Right ventricle myocardium inferior (tissue), 1 donor: ENCODE measurements at regions of chr3 and their contacts with region 1.

Region 1: GRCh38 chr3:185983495-185984141 is 45.8 kb upstream of the TRA2B start:
- DNase-seq: peak; percentile 76
- ATAC-seq: peak; percentile 86

Region 2: DNA sequence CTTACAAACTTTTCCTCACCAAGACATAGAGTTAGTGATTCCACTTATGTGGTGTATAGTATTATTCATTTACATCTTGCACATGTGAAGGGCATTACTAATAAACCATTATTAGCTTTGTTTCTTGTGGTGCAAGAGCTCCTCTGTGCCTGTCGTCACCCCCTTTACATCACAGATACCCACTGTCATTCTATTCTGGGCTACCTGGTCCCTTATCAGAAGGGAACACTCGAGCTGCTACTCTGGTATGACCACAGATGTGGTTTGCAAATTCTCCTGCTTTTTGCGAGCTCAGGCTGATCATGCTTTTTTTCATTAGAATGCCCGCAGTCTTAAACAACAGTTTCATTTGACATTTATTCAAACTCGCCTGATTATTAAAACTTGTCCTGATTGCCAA is 411.4 kb before region 1 on chr3:
- intact Hi-C with region 1: no loop called
- DNase-seq: no peak
- ATAC-seq: no peak

Region 3: DNA sequence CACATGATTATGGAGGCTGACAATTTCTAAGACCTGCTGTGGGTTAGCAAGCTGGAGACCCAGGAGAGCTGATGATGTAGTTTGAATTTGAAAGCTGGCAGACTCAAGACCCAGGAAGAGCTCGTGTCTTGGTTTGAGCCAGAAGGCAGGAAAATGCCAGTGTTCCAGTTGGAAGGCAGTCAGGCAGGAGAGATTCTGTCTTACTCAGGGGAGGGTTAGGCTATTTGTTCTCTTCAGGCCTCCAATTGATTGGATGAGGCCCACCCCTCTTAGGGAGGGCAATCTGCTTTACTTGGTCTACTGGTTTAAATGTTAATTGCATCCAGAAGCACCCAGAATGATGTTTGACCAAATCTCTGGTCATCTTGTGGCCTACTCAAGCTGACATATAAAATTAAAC is 118.4 kb before region 1 on chr3:
- intact Hi-C with region 1: no loop called
- DNase-seq: no peak
- ATAC-seq: no peak

Region 4: GRCh38 chr3:186241910-186242821 is 258.5 kb after region 1 on chr3:
- intact Hi-C with region 1: loop called (anchors 1 kb)
- DNase-seq: peak; percentile 85
- ATAC-seq: peak; percentile 92

Region 5: GRCh38 chr3:186277268-186277909 is 293.8 kb after region 1 on chr3:
- intact Hi-C with region 1: loop called (anchors 5 kb)
- DNase-seq: no peak
- ATAC-seq: no peak

Region 6: DNA sequence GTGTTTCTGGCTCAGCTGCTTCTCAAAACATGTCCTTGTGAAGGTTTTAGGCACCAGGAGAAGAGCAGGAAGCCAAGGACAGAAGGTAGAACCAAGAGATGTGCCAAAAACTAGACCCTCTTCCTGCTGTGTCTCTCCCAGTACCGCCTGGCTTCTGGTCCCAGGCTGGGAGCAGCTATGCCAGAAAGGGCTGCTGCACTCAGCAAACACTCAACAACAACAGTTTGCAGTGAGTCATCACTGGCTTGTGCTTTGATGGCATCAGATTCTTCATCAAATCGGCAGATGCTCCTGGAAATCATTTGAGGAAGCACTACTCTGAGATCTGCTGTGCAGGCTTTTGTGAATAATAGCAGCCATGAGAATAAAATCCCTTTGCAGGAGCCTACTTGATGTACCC is 315.3 kb after region 1 on chr3:
- intact Hi-C with region 1: no loop called
- DNase-seq: no peak
- ATAC-seq: no peak

Region 7: DNA sequence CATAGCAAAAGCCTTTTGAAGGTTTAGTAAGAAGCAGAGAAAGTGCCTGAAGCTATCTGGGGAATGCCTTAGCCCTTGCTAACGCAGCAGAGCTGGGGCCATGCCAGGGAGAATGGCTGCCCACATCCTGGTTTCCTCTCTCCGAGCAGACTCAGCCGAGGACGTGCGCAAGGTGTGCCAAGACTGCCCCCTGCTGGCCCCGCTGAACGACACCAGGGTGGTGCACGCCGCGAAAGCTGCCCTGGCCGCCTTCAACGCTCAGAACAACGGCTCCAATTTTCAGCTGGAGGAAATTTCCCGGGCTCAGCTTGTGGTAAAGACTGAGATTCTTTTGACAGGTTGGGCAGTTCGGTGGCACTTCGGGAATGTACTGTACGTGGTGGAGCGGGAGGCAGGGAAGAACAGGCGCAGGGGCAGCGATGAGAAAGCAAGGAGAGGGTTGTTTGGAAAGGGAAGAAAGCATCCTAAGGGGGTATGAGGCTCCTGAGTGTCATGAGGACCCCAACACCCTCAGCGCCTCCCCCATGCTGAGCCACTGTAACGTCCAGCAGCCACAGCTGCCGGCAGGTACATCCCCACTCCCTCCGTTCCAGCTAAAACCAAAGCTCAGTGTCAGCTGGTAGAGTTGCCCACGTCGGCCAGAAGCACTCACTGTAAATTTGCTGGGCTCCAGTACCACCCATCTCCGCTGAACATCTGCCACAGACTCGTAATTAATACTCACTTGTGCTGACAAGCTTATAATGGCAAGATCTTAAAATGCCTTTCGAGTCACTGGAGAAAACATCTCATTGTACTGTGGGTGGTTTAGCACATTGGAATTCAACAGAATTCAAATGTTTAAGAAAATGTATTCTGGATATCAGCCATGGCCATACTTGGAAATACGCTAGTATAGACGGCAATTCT is 633.7 kb after region 1 on chr3:
- intact Hi-C with region 1: loop called (anchors 5 kb)
- DNase-seq: peak; percentile 91
- ATAC-seq: peak; percentile 95

Region 8: DNA sequence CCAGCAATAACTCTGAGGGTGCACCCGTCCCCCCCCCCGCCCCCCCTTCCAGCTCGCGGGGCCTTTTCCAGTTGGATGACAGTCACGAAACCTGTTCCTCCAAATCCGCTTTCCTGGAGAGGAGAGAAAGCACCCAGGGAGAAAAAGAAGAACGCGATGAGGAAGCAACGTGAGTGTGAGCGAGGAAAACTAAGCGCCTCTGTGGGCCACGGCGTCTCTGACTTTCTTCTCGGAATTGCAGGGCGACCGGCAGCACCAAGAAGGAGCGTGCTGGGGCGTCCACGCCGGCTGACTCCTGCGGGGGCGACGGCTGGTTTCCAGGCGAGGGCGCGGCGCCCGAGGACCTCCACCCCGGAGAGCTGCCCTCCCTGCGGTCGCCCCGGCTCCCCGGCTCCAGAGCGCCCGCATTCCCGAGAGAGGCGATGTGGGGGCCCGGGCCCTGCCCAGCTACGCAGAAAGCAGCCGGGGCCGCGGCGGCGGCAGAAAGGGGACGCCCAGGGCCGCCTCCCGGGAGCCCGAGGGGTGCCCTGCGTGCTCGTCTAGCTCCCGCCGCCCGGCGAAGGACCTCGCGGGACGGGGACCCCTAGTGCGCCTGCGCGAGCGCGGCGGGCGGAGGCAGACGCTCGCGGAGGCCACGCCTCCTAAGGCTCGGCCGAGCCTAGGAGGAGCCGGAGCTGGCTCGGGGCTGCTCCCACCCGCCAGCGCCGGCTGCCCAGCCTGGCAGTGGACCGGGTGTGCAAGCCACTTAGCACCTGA is 843.5 kb after region 1 on chr3:
- intact Hi-C with region 1: loop called (anchors 10 kb)
- DNase-seq: peak; percentile 91
- ATAC-seq: peak; percentile 96